Aorta (tissue), 5 donors: ENCODE measurements at regions of chr2 and their contacts with region 1.

Region 1: DNA sequence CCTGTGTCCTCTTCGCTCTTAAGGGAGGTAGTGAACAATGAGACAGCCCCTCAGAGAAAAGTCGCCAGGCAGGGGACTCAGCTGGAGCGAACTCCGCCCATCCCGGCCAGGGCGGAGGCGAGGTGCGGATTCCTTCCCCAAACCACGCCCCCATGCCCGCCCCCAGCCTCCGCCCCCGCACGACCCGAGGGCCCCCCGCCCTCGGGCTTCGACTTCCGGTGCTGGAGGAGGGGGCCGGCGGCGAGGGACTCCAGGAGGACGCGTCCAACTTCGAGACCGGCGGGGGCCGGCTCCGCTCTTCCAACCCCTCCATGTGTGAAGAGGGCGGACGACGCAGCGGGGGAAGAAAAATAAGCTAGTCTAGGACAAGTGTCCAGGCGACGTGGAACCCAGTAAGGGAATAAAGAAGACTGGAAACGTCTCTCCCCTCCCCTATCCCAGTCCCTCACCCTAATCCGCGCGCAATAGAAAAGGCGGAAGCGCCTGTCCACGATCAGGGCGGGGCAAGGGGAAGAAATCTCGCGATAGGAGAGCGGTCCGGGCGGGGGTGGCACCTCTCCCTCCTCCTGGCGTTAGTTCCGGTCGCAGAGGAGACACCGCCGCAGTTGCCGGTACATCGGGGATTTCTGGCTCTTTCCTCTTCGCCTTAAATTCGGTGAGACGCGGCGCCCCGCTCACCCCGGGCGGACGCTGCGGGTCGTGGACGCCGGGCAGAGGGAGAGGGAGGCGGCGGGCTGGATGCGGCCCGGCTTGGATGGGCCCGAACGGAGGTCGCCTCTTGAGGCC is at the start of gene BZW1:
- DNase-seq: peak; percentile 97 to 99
- ATAC-seq: peak; percentile 98
- H3K4me3 ChIP-seq: peak within 1 kb of the TSS; percentile 85 to 91
- H3K27ac ChIP-seq: peak within 1 kb of the TSS; percentile 83 to 97
- H3K4me1 ChIP-seq: no peaks in the 10 kb centered on the region
- H3K27me3 ChIP-seq: no peaks in the 10 kb centered on the region
- total RNA-seq, gene BZW1: 193 to 250 TPM

Region 2: GRCh38 chr2:200742426-200742825 is 69.1 kb before region 1 on chr2:
- intact Hi-C with region 1: loop called (anchors 1 to 5 kb)
- DNase-seq: peak; percentile 90 to 92
- ATAC-seq: peak; percentile 91
- H3K4me3 ChIP-seq: no peak overlapping the region
- H3K27ac ChIP-seq: peak overlapping the region; percentile 58 to 95
- H3K4me1 ChIP-seq: peaks cover 3 to 6% of the 10 kb centered on the region in 2 donors
- H3K27me3 ChIP-seq: no peaks in the 10 kb centered on the region

Region 3: GRCh38 chr2:200761168-200761720 is 50.3 kb before region 1 on chr2:
- intact Hi-C with region 1: loop called in 1 of 2 experiments (anchors 5 kb)
- DNase-seq: no peak
- ATAC-seq: no peak
- H3K4me3 ChIP-seq: no peak overlapping the region
- H3K27ac ChIP-seq: no peak overlapping the region
- H3K4me1 ChIP-seq: peaks cover 0 to 4% of the 10 kb centered on the region in 2 donors
- H3K27me3 ChIP-seq: no peaks in the 10 kb centered on the region

Region 4: DNA sequence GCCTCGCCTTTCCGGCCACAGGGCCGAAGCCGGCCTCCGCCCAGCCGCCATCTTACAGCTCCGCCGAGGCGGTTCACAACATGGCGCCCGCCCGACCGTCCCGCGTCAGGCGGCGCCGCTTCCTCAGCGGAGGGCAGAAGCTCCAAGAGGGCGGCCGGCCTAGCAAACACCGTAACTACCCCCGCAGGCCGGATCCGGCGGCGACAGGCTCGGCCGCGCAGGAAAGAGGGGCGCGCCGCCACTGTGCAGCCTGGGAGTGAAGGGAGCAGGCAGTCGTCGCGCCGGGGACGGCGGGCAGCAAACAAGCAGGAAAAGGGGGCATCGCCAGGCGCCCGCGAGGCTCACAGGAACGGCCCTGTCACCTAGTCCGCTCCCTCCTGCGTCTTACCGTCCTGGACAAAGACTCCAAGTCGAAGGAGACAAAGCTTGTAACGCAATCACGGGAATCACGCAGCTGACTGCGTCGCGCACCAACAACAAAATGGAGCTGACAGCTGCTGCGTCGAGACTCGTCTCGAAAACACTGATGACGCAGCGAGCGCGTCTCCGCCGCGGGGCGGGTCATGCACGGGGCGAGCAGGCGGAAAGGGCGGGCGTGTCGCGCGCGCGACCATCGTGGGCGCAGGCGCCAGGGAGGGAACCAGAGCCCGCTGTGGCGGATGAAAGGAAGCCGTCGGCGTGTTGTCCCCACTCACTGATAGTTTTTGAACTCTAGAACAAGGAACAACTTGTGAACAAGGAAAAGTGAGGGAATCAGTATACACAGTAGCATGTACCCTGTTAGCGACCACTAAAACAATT is 52.8 kb after region 1 on chr2 and contains the start of gene CLK1:
- intact Hi-C with region 1: loop called (anchors 5 kb)
- DNase-seq: peak; percentile 99 to 100
- ATAC-seq: peak; percentile 96
- H3K4me3 ChIP-seq: peak within 1 kb of the TSS; percentile 80 to 95
- H3K27ac ChIP-seq: peak within 1 kb of the TSS; percentile 99 to 100
- H3K4me1 ChIP-seq: no peaks in the 10 kb centered on the region
- H3K27me3 ChIP-seq: no peaks in the 10 kb centered on the region
- total RNA-seq, gene CLK1: 167 to 197 TPM